ENCODE measurements at regions of chr6 and their contacts with region 1.

Region 1: DNA sequence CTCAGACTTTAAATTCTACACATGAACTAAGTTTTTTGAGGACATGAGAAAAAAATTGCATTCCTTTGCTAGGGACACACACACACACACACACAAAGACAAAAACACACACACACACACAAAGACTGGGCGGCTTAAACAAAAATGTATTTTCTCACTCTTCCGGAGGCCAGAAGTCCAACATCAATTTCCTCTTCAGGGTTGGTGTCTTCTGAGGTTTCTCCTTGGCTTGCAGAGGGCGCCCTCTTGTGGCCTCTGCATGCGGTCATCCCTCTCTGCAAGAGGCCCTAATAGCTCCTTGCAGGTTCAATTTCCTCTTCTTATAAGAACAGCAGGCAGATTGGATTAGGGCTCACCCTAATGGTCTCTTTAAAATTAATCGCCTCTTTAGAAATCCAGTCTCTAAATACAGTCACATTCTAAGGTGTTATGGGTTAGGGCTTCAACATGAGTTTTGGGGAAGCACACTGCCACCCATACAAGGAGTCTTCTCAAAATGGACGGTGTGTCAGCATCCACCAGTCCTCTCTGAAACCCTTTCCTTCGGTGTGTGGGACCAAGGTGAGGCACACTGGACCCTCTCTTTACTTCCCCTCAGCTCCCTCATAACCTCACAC is 61.4 kb downstream of the GPR6 start:
- H3K4me3 ChIP-seq: peak overlapping the region; percentile 1
- H3K27ac ChIP-seq: no peak overlapping the region
- H3K4me1 ChIP-seq: no peaks in the 10 kb centered on the region
- CTCF ChIP-seq: peak; percentile 88

Region 2: DNA sequence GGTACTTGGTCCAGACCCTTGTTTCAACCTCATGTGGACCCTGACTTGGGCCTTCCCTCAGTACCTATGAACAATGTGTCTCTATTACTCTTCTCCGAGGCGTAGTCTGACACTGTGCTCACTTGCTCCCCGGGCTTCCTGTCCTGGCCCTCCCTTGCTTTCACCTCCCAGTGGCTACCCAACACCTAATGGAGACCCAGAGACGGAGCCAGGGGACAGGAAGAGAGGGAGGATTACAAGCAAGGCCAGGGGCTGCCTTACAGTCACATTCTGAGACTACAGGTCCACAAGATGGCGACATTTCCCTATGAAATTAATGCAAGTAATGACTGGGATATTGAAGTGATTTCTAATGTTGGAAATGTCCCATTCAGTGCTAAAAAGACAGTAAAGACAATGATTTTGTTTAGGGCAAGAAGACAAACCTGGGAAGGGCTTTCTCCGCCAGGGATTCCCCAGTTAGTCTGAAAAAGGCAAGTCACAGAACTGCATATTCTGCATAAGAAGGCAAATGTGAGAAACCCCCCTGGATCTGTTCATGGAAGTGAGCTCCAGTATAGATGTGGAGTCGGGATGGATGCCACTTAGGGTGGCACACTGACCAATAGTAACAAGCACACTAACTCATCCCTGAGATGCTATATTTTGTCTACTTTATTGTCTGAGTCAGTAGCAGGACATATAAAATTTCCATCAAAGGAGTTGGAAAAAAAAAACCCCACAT is 512.4 kb before region 1 on chr6:
- CTCF ChIA-PET with region 1: interaction called, 49 read pairs
- POLR2A ChIA-PET with region 1: no interaction called
- H3K4me3 ChIP-seq: no peak overlapping the region
- H3K27ac ChIP-seq: no peak overlapping the region
- H3K4me1 ChIP-seq: no peaks in the 10 kb centered on the region
- CTCF ChIP-seq: peak; percentile 53; the same call in 1 of the 2 replicates

Region 3: GRCh38 chr6:109606359-109606758 is 433.1 kb before region 1 on chr6:
- CTCF ChIA-PET with region 1: no interaction called
- POLR2A ChIA-PET with region 1: no interaction called
- H3K4me3 ChIP-seq: no peak overlapping the region
- H3K27ac ChIP-seq: no peak overlapping the region
- H3K4me1 ChIP-seq: no peaks in the 10 kb centered on the region
- CTCF ChIP-seq: no peak

Region 4: GRCh38 chr6:109695468-109695867 is 344.0 kb before region 1 on chr6:
- CTCF ChIA-PET with region 1: interaction called, 204 read pairs
- POLR2A ChIA-PET with region 1: no interaction called
- H3K4me3 ChIP-seq: no peak overlapping the region
- H3K27ac ChIP-seq: no peak overlapping the region
- H3K4me1 ChIP-seq: peaks cover 3% of the 10 kb centered on the region; the same call in 1 of the 2 replicates
- CTCF ChIP-seq: no peak

Region 5: DNA sequence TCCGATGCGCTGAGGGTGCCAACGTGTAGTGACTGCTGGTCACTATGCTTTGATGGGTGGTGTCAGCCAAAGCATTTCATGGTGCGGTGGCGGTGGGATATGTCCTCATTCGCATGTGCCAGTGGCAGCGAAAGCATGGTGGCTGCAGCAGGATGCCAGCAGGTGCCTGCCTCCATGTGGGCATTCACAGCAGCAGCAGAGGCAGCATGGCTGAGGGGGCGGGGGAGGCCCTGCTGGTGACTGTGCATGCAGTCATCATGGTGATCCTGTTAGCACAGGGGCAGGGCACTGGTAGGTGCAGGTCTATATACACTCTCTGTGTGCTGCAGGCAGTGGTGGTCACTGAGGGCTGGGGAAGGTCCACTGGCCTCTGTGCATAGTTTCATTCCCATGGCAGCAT is 326.4 kb before region 1 on chr6:
- CTCF ChIA-PET with region 1: interaction called, 42 read pairs
- POLR2A ChIA-PET with region 1: no interaction called
- H3K4me3 ChIP-seq: no peak overlapping the region
- H3K27ac ChIP-seq: no peak overlapping the region
- H3K4me1 ChIP-seq: no peaks in the 10 kb centered on the region
- CTCF ChIP-seq: no peak

Region 6: DNA sequence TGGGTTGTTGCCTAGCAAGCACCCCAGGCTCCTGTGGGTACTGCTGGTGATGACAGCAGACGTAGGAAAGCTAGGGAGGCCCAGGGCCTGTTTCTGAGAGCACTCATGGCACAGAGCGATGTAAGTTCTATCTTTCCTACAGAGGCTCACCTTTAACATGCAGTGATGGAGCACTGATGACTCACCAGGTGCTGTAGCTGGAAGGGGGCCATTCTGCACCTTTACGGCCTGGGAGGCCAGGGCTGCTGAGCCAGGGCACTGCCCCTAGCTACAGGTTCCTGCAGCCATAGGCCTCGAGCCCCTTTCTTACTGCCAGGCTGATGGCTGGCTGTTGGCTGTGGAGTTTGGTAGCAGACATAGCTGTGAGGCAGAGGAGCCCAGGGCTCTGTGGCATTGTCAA is 92.5 kb before region 1 on chr6:
- CTCF ChIA-PET with region 1: interaction called, 11 read pairs
- POLR2A ChIA-PET with region 1: no interaction called
- H3K4me3 ChIP-seq: no peak overlapping the region
- H3K27ac ChIP-seq: no peak overlapping the region
- H3K4me1 ChIP-seq: no peaks in the 10 kb centered on the region
- CTCF ChIP-seq: no peak

Region 7: GRCh38 chr6:110029144-110029543 is 10.3 kb before region 1 on chr6:
- CTCF ChIA-PET with region 1: interaction called, 52 read pairs
- POLR2A ChIA-PET with region 1: no interaction called
- H3K4me3 ChIP-seq: no peak overlapping the region
- H3K27ac ChIP-seq: no peak overlapping the region
- H3K4me1 ChIP-seq: no peaks in the 10 kb centered on the region
- CTCF ChIP-seq: no peak

Region 8: DNA sequence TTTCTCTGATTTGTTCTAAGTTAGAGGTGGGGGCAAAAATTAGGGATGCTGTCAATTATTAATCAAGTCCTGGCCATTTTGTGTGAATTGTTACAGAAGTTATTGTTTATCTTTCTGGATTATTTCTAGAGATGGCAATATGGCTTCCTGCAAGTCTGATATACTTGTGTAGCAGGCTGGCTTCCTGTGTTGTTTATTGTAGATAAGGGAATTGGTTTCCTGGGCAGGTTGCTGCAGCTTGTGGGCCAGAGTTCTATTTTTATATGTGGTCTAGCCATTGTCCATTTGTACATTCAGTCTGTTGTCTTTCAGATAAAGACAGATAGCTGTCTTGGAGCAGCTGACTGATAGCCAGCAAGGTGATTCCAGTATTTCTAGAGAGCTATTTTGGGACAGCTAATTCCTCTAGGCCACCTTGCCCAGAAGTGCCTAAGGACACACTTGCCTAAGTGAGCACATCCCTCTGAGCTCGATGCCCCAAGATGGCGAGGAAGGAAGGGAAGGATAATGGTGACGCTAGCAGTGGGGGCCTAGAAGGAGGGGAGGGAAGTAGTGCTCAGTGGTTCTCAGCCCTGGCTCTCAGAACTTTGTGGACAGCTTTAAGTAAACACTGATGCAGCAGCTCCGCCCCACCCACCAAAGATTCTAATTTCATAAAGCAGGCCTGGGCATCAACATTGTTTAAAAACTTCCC is 350.4 kb after region 1 on chr6:
- CTCF ChIA-PET with region 1: interaction called, 98 read pairs
- POLR2A ChIA-PET with region 1: no interaction called
- H3K4me3 ChIP-seq: no peak overlapping the region
- H3K27ac ChIP-seq: no peak overlapping the region
- H3K4me1 ChIP-seq: peaks cover 10% of the 10 kb centered on the region
- CTCF ChIP-seq: no peak

Region 9: DNA sequence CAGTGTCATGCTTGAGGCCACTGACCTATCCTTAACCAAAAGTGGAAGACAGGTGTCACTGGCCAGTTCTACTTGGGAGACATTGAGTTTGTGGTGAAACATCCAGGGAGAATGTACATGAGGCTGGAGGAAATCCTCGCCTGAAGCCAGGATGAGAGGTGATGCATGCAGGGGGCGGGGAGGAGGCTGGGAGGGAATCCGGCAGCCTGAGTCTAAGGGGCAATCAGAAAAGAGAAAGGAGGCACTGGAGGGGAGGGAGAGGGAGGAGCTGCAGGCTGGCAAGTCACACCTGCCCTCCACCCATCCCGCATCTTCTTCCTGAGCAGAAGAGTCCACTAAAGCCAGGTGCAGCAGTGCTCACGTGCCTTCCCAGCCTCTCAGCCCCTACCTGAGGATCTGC is 390.8 kb after region 1 on chr6:
- CTCF ChIA-PET with region 1: no interaction called
- POLR2A ChIA-PET with region 1: no interaction called
- H3K4me3 ChIP-seq: no peak overlapping the region
- H3K27ac ChIP-seq: no peak overlapping the region
- H3K4me1 ChIP-seq: no peaks in the 10 kb centered on the region
- CTCF ChIP-seq: no peak